ENCODE measurements at regions of chr4 and their contacts with region 1.

Region 1: DNA sequence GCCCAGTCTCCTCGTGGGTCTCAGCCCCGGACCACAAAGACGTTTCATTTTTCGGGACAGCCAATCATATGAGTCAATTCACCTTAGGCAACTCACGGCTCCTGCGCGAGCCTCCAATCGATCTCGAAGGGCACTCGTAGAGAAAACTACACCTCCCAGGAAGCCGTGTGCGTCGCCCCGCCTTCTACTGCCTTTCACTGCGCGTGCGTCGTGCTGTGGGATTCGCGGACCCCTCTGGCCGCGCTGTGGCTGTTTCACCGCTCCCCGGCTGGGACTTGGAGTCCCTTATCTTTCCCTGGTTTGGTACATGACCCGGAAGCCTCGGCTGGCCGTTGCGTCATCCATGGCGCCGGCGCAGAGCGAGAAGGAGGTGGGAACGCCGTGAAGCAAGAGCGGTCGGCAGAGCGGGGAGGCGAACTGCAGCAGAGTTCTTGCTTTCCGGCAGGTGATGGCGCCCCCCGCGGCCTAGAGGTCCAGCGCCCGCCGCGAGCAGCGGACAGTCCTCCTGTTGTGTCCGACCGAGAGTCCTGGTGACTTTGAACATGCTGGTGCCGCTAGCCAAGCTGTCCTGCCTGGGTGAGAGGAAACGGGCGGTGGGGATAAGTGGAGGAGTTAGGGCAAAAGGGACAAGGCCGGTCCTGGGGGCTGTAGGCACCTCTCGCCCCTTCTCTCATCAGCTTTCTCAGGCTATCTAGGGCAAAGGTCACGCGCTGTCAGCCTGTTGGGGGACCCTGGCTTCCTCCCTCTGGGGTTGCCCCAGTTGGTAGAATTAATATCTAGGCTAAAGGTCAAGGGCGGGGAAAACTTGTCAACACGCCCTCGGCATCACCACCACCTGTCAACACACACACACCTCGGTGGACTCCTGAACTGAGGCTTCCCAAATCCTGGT is at the start of gene ETFDH:
- DNase-seq: peak; percentile 98
- H3K4me3 ChIP-seq: peak within 1 kb of the TSS; percentile 81
- H3K27ac ChIP-seq: peak within 1 kb of the TSS; percentile 78
- H3K4me1 ChIP-seq: peaks cover 7% of the 10 kb centered on the region
- CTCF ChIP-seq: peak; percentile 82
- total RNA-seq, gene ETFDH: 13.3 and 17.6 TPM in 2 replicates

Region 2: GRCh38 chr4:158722917-158723793 is 51.0 kb after region 1 on chr4 and contains the start of gene PPID:
- CTCF ChIA-PET with region 1: no interaction called
- POLR2A ChIA-PET with region 1: no interaction called
- intact Hi-C with region 1: loop called (anchors 2 kb)
- DNase-seq: peak; percentile 85
- H3K4me3 ChIP-seq: peak within 1 kb of the TSS; percentile 96
- H3K27ac ChIP-seq: peak within 1 kb of the TSS; percentile 29
- H3K4me1 ChIP-seq: peaks cover 13% of the 10 kb centered on the region
- CTCF ChIP-seq: no peak
- total RNA-seq, gene PPID: 27.3 and 29.9 TPM in 2 replicates

Region 3: DNA sequence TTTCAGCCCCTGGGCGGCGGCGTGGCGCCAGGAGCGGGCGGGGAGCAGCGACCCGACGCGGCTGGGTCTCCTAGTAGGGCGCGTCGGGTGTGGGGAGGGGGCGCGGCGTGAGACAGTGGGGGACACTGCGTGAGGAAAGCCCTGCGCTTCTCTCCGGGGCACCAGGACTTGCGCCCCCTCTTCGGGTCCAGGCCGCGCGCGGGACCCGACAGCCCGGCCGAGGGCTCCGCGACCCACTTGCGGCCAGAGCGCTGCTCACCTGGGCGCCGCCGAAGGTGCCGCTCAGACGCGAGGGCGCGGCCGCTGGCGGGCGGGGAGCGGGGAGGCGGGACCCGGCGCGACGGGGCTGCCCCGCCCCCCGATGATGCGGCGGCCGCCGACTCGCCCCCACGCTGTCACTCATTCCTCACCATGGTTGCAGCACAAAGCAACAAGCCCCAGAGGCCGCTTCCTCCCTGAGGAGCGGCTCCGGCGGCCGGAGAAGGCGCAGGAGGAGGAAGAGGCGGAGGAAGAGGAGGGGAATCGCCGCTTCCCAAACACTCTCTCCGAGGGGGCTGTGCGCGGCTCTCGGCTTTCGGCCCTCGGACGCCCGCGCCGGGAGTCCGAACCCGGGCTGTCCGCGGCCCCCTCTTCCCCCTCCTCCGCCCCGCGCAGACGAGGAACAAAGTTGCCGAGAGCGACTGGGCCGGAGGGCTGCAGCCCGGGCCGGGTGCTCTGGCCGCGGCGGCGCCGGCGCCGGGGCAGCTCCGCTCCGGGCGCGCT is 430.6 kb after region 1 on chr4 and contains the start of gene RAPGEF2:
- CTCF ChIA-PET with region 1: no interaction called
- POLR2A ChIA-PET with region 1: no interaction called
- intact Hi-C with region 1: loop called (anchors 5 kb)
- DNase-seq: peak; percentile 88
- H3K4me3 ChIP-seq: peak within 1 kb of the TSS; percentile 83
- H3K27ac ChIP-seq: no peak within 1 kb of the TSS
- H3K4me1 ChIP-seq: peaks cover 21% of the 10 kb centered on the region
- CTCF ChIP-seq: no peak
- total RNA-seq, gene RAPGEF2: 4.6 and 4.7 TPM in 2 replicates

Measured in OCI-LY7 (cell line).